ENCODE measurements at regions of chr1 and their contacts with region 1.

Region 1: GRCh38 chr1:54671985-54672608 is 30.5 kb downstream of the MROH7 start:
- DNase-seq: peak; percentile 39 to 77 (median 63)
- ATAC-seq: peak; percentile 85
- H3K4me3 ChIP-seq: no peak overlapping the region
- H3K4me3 Mint-ChIP-seq: no peak overlapping the region
- H3K27ac ChIP-seq: no peak overlapping the region
- H3K27ac Mint-ChIP-seq: no peak overlapping the region
- H3K4me1 ChIP-seq: no peaks in the 10 kb centered on the region
- H3K4me1 Mint-ChIP-seq: no peaks in the 10 kb centered on the region
- H3K27me3 ChIP-seq: no peaks in the 10 kb centered on the region
- H3K27me3 Mint-ChIP-seq: no peaks in the 10 kb centered on the region
- CTCF ChIP-seq: peak; percentile 69

Region 2: DNA sequence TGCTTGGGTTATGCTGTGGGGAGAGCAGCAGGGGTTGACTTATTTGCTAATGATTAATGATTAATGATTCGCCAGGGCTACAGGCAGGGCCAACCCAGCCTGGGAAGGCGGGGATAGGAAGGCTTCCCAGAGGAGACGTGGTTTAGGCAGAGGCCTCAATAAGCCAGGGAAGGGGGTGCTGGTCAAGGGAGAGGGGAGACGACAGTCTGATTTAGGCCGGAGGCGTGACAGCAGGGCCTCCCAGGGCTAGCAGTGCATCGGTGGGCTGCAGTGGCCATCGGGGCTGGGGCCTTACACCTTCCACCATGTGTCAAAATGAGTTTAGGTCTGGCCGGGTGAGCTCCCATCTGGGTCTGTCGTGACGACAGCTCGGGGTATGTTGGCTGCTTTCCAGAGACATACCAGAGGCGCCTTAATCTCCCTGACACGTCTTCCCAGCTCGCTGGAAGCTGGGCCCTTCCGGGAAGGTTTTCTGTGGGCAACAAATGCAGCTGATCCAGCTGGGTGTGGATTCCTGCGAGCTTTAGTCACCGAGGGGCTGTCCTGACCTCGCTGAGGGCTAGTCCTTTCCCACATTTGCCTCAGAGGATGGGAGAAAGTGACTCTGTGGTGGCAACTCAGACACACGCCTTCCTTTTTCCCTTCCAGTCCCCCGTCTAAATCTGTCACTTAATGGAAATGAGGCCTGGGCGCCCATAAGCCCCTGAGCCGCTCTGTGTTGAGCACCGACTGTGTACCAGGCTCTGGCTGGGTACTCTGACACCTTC is 1526.0 kb before region 1 on chr1:
- CTCF ChIA-PET with region 1: no interaction called
- POLR2A ChIA-PET with region 1: no interaction called
- intact Hi-C with region 1: loop called in 1 of 2 experiments (anchors 10 kb)
- DNase-seq: no peak
- ATAC-seq: no peak
- H3K4me3 ChIP-seq: no peak overlapping the region
- H3K4me3 Mint-ChIP-seq: no peak overlapping the region
- H3K27ac ChIP-seq: no peak overlapping the region
- H3K27ac Mint-ChIP-seq: no peak overlapping the region
- H3K4me1 ChIP-seq: no peaks in the 10 kb centered on the region
- H3K4me1 Mint-ChIP-seq: peaks cover 3% of the 10 kb centered on the region
- H3K27me3 ChIP-seq: no peaks in the 10 kb centered on the region
- H3K27me3 Mint-ChIP-seq: no peaks in the 10 kb centered on the region
- CTCF ChIP-seq: no peak

Region 3: DNA sequence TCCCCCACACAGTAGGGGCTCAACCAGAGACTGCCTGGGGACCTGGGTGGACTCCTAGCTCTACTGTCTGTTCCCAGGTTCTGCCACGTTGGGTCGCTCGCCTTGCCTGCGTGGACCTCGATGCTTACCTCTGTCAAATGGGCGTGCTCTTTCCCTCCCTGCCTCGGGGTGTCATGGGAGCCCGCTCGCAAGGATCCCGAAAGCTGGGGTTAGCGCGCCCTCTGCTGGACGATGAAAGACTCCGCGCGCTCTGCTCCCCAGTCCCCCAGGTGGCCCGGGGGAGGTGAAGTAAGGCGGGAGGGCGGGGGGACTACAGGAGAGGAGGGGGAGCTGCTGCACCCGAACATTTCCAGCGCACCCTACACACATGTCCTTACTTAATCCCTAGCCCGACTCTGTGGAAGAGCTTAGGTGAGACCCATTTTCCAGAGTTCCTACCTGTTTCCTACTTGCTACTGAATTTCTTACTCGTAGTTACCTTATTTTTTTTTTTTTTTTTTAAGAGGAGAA is 324.3 kb after region 1 on chr1:
- CTCF ChIA-PET with region 1: no interaction called
- POLR2A ChIA-PET with region 1: no interaction called
- intact Hi-C with region 1: loop called in 1 of 2 experiments (anchors 5 kb)
- DNase-seq: peak; percentile 58 to 85 (median 76)
- ATAC-seq: peak; percentile 73
- H3K4me3 ChIP-seq: peak overlapping the region; percentile 12 to 13
- H3K4me3 Mint-ChIP-seq: peak overlapping the region; percentile 59
- H3K27ac ChIP-seq: peak overlapping the region in 1 of 2 experiments; percentile 25
- H3K27ac Mint-ChIP-seq: peak overlapping the region; percentile 35
- H3K4me1 ChIP-seq: peaks cover 20% of the 10 kb centered on the region
- H3K4me1 Mint-ChIP-seq: peaks cover 24% of the 10 kb centered on the region
- H3K27me3 ChIP-seq: peaks cover 6 to 21% of the 10 kb centered on the region in 2 experiments
- H3K27me3 Mint-ChIP-seq: peaks cover 43% of the 10 kb centered on the region
- CTCF ChIP-seq: peak; percentile 55